ENCODE measurements at regions of chr3 and their contacts with region 1.

Region 1: DNA sequence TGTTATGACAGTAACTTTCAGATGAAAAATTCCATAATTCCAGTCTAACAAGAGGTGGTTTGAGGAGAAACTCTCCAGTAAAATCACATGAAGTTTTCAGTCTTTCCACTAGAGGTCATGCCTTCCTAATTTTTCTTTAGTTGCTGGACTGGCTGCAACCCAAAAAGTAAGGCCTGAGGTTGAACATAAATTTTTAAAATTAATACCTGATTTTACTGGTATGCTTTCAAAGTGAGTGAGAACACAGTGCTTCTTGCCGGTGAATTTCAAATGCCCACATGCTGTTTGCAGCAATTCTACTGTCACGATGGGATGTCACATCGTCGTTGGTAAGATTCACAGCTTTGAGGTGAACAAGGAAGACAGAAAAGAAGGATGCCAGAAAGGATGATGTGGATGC is 89.0 kb upstream of the FGF12 start:
- DNase-seq: no peak
- ATAC-seq: no peak

Region 2: GRCh38 chr3:193040836-193041672 is 224.7 kb after region 1 on chr3:
- intact Hi-C with region 1: loop called (anchors 1 kb)
- DNase-seq: no peak
- ATAC-seq: no peak